MCF 10A (cell line): ENCODE measurements at regions of chr1 and their contacts with region 1.

Region 1: GRCh38 chr1:157496121-157496526 is 56.2 kb downstream of the FCRL5 start:
- DNase-seq: peak; percentile 74
- H3K4me3 Mint-ChIP-seq: no peak overlapping the region
- H3K27ac Mint-ChIP-seq: no peak overlapping the region
- H3K4me1 Mint-ChIP-seq: peaks cover 5% of the 10 kb centered on the region
- H3K27me3 Mint-ChIP-seq: peaks cover 90% of the 10 kb centered on the region
- CTCF ChIP-seq: peak; percentile 95

Region 2: DNA sequence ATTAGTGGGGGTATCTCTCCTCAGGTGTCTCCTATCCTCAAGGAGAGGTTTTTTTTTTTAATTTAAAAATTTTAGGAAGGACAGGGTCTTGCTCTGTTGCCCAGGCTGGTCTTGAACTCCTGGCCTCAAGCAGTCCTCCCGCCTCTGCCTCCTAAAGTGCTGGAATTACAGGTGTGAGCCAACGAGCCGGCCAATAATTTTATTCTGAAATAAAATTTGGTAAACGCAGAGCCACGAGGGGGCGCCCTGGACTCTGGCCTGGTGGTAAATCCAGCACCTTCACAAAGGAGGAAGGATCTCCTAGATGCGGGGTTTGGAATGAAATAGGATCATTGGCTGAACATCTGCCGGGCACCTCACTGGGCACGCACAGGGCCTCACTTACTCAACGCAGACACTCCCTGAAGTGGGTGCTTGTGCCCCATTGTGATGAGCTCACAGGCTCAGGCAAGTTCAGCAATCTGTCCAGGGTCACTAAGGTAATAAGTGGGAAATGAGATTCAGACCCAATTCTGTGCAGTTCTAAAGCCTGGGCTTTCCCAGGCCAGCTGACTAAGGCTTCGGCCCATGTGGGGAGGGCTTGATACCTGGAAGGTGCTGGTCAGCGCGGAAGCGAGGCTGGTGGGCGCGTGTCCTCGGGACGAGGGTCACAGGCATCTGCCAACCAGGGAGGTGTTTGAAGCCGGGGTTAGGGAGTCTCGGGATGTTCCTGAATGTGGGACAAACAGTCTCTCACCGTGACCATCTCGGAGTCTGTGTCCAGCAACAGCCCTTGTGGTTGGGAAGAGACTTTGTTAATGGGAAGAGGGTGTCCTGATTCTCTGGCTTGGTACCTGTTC is 325.2 kb before region 1 on chr1:
- CTCF ChIA-PET with region 1: interaction called, 40 read pairs
- POLR2A ChIA-PET with region 1: no interaction called
- intact Hi-C with region 1: no loop called
- DNase-seq: peak; percentile 57
- H3K4me3 Mint-ChIP-seq: no peak overlapping the region
- H3K27ac Mint-ChIP-seq: no peak overlapping the region
- H3K4me1 Mint-ChIP-seq: no peaks in the 10 kb centered on the region
- H3K27me3 Mint-ChIP-seq: peaks cover 56% of the 10 kb centered on the region
- CTCF ChIP-seq: peak; percentile 49

Region 3: GRCh38 chr1:157193702-157194391 is 302.3 kb before region 1 on chr1:
- CTCF ChIA-PET with region 1: interaction called, 54 read pairs
- POLR2A ChIA-PET with region 1: no interaction called
- intact Hi-C with region 1: loop called (anchors 1 kb)
- DNase-seq: peak; percentile 77
- H3K4me3 Mint-ChIP-seq: no peak overlapping the region
- H3K27ac Mint-ChIP-seq: no peak overlapping the region
- H3K4me1 Mint-ChIP-seq: peaks cover 6% of the 10 kb centered on the region
- H3K27me3 Mint-ChIP-seq: peaks cover 32% of the 10 kb centered on the region
- CTCF ChIP-seq: peak; percentile 83

Region 4: DNA sequence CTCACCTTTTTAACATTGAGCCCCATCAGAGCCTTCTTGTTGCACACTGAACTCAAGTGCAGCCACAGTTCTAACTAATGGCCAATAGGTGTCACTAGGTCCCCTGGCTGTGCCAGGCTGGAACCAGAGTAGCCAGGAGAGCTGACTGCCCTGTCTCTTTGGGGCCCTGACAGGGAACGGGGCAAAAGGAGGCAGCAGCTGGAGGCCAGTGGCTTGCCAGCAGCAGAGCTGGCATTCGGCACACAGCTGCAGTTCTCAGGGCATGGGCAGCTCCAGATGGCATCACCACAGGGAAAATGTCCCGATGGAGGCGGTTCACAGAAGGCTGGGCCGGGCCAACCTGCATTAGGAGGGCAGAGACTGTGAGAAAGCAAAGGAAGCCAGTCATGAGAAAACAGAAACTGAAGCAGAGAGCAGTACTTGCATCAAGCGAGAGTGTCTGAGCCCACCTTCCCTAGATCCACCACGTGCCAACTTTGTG is 132.4 kb before region 1 on chr1:
- CTCF ChIA-PET with region 1: interaction called, 123 read pairs
- POLR2A ChIA-PET with region 1: interaction called, 4 read pairs
- intact Hi-C with region 1: no loop called
- DNase-seq: peak; percentile 73
- H3K4me3 Mint-ChIP-seq: no peak overlapping the region
- H3K27ac Mint-ChIP-seq: no peak overlapping the region
- H3K4me1 Mint-ChIP-seq: peaks cover 8% of the 10 kb centered on the region
- H3K27me3 Mint-ChIP-seq: peaks cover 13% of the 10 kb centered on the region
- CTCF ChIP-seq: peak; percentile 75

Region 5: GRCh38 chr1:157482174-157482573 is 13.9 kb before region 1 on chr1:
- CTCF ChIA-PET with region 1: interaction called, 73 read pairs
- POLR2A ChIA-PET with region 1: no interaction called
- intact Hi-C with region 1: no loop called
- DNase-seq: peak; percentile 29
- H3K4me3 Mint-ChIP-seq: no peak overlapping the region
- H3K27ac Mint-ChIP-seq: no peak overlapping the region
- H3K4me1 Mint-ChIP-seq: no peaks in the 10 kb centered on the region
- H3K27me3 Mint-ChIP-seq: no peaks in the 10 kb centered on the region
- CTCF ChIP-seq: no peak

Region 6: DNA sequence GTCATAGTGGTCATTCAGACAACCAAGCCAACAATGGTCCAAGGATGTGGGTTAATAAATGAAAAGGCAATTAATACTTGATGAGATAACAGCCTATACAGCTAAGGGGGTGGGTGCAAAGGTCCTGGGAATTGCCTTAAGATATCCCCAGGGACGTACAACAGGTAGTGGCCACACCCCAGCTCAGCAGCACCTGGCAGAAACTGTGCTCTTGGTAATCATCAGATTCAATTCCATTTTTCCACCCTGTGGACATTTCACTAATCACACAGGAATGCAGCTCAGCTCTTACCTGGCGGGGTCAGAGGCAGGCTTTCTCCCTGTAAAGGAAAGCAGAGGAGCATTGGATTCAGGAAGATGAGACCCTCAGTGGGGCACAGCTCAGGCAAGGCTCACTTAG is 23.3 kb after region 1 on chr1:
- CTCF ChIA-PET with region 1: interaction called, 13 read pairs
- POLR2A ChIA-PET with region 1: no interaction called
- intact Hi-C with region 1: no loop called
- DNase-seq: no peak
- H3K4me3 Mint-ChIP-seq: no peak overlapping the region
- H3K27ac Mint-ChIP-seq: no peak overlapping the region
- H3K4me1 Mint-ChIP-seq: no peaks in the 10 kb centered on the region
- H3K27me3 Mint-ChIP-seq: peaks cover 12% of the 10 kb centered on the region
- CTCF ChIP-seq: no peak

Region 7: GRCh38 chr1:157646144-157646543 is 150.0 kb after region 1 on chr1:
- CTCF ChIA-PET with region 1: no interaction called
- POLR2A ChIA-PET with region 1: no interaction called
- intact Hi-C with region 1: no loop called
- DNase-seq: no peak
- H3K4me3 Mint-ChIP-seq: no peak overlapping the region
- H3K27ac Mint-ChIP-seq: no peak overlapping the region
- H3K4me1 Mint-ChIP-seq: no peaks in the 10 kb centered on the region
- H3K27me3 Mint-ChIP-seq: peaks cover 60% of the 10 kb centered on the region
- CTCF ChIP-seq: no peak

Region 8: DNA sequence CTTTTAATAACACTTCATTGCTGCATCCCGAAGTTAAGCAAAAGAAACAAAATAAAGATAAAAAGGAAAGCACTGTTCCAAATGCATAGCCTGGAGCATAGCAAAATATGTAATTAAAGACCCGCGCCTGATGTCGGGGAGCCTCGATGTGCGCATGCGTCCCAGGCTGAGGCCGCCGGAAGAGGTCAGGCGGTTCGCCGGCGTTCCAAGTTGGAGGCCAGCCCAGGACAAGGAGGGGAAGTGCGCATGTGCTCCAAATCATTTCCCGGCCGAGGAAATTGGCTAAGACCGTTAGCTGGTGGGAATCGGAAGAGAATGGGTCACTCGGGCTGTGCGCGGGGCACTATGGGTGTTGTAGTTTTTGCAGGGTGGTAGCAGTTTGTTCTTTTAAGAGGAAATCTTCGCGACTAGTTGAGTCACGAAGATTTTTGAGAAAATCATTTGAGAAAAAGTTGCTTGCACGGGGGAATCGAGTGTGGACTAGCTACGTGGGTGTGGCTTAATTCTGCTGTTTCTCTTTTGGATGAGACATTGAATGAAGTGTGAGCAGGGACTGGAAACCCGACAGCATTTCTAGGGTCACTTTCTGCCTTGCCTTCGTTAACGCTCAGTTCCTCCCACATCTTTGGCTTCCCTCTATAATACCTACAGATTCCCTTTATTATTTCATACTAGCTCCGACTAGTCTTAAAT is 653.6 kb after region 1 on chr1:
- CTCF ChIA-PET with region 1: no interaction called
- POLR2A ChIA-PET with region 1: no interaction called
- intact Hi-C with region 1: no loop called
- DNase-seq: peak; percentile 100
- H3K4me3 Mint-ChIP-seq: peak overlapping the region; percentile 71
- H3K27ac Mint-ChIP-seq: peak overlapping the region; percentile 82
- H3K4me1 Mint-ChIP-seq: peaks cover 70% of the 10 kb centered on the region
- H3K27me3 Mint-ChIP-seq: no peaks in the 10 kb centered on the region
- CTCF ChIP-seq: no peak